ENCODE measurements at regions of chr3 and their contacts with region 1.

Region 1: GRCh38 chr3:81823882-81824395 is 62.5 kb upstream of the GBE1 start:
- DNase-seq: no peak
- ATAC-seq: no peak
- H3K4me3 ChIP-seq: no peak overlapping the region
- H3K27ac ChIP-seq: no peak overlapping the region
- H3K4me1 ChIP-seq: no peaks in the 10 kb centered on the region
- H3K27me3 ChIP-seq: no peaks in the 10 kb centered on the region
- CTCF ChIP-seq: no peak
- EP300 ChIP-seq: no peak
- POLR2A ChIP-seq: no peak
- RAD21 ChIP-seq: no peak

Region 2: DNA sequence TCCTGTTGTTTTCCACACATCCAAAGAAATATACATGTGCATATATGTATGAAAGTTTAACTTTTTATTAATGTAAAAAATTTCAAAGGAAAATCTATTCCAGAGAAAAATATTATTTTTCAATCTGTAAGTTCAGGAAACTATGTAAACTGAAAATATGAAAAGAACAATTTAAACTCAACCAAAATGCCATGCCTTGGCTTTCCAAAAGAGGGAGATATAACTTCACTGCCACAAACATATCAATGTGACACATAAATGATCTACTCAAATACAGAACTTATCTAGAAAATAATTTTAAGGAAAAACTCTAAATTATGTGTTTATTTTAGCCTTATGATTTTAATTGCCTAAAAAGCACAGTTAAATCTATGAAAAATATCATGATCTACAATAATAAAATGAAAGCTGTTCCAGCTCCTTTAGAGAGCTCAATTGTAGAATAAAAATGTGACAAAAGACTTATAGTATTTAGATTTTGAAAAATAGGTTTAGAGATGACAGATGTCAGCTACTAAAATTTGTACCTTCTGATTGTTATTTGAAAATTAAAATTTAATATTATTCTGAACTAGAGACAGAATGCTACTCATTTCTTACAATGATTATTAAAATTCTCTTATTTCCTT is 157.3 kb before region 1 on chr3:
- CTCF ChIA-PET with region 1: no interaction called
- POLR2A ChIA-PET with region 1: no interaction called
- in situ Hi-C with region 1: no loop called
- intact Hi-C with region 1: loop called (anchors 10 kb)
- DNase-seq: peak in 1 of 4 experiments; percentile 3
- ATAC-seq: no peak
- H3K4me3 ChIP-seq: no peak overlapping the region
- H3K27ac ChIP-seq: no peak overlapping the region
- H3K4me1 ChIP-seq: 0 out of 5 replicates have a peak, but pooled peaks cover 0 to 3% of the 10 kb centered on the region in 2 experiments
- H3K27me3 ChIP-seq: no peaks in the 10 kb centered on the region
- CTCF ChIP-seq: peak in 2 of 3 experiments; percentile 24 to 63; a peak in 3 of 6 replicates
- EP300 ChIP-seq: no peak
- POLR2A ChIP-seq: no peak
- RAD21 ChIP-seq: peak; percentile 55 to 77

Region 3: DNA sequence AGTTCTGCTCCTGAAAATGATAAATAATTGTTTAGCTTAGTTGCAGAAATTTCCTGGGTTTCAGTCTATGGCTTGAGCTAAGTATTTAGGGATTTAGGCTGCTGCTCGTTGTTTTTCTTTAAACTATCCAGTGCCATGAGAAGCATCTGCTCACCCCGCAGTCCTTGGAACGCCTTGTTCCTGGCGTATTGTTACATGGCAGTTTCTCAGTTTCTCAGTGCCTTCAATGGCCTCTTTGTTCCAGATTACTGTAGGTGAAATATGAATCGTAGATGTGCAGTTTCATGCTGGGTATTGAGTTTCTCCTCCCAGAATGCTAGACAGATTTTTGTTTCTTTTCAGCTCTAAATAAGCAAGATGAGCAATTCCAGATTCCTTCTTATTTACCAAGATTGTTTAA is 207.0 kb after region 1 on chr3:
- CTCF ChIA-PET with region 1: no interaction called
- POLR2A ChIA-PET with region 1: no interaction called
- in situ Hi-C with region 1: no loop called
- intact Hi-C with region 1: no loop called
- DNase-seq: no peak
- ATAC-seq: no peak
- H3K4me3 ChIP-seq: no peak overlapping the region
- H3K27ac ChIP-seq: no peak overlapping the region
- H3K4me1 ChIP-seq: no peaks in the 10 kb centered on the region
- H3K27me3 ChIP-seq: no peaks in the 10 kb centered on the region
- CTCF ChIP-seq: no peak
- EP300 ChIP-seq: no peak
- POLR2A ChIP-seq: no peak
- RAD21 ChIP-seq: no peak

Measured in K562 (cell line).